ENCODE measurements at regions of chr16 and their contacts with region 1.

Region 1: GRCh38 chr16:69610356-69610755 is 44.6 kb downstream of the NFAT5 start:
- DNase-seq: no peak
- H3K4me3 Mint-ChIP-seq: peak overlapping the region; percentile 10
- H3K27ac Mint-ChIP-seq: peak overlapping the region; percentile 68
- H3K4me1 Mint-ChIP-seq: peaks cover 30% of the 10 kb centered on the region
- H3K27me3 Mint-ChIP-seq: no peaks in the 10 kb centered on the region
- CTCF ChIP-seq: no peak

Region 2: GRCh38 chr16:69595127-69596036 is 15.0 kb before region 1 on chr16:
- CTCF ChIA-PET with region 1: interaction called, 4 read pairs
- POLR2A ChIA-PET with region 1: interaction called, 10 read pairs
- intact Hi-C with region 1: no loop called
- DNase-seq: peak; percentile 61
- H3K4me3 Mint-ChIP-seq: peak overlapping the region; percentile 16
- H3K27ac Mint-ChIP-seq: peak overlapping the region; percentile 40
- H3K4me1 Mint-ChIP-seq: peaks cover 31% of the 10 kb centered on the region
- H3K27me3 Mint-ChIP-seq: no peaks in the 10 kb centered on the region
- CTCF ChIP-seq: no peak